Right ventricle myocardium superior (tissue), 1 donor: ENCODE measurements at regions of chr11 and their contacts with region 1.

Region 1: DNA sequence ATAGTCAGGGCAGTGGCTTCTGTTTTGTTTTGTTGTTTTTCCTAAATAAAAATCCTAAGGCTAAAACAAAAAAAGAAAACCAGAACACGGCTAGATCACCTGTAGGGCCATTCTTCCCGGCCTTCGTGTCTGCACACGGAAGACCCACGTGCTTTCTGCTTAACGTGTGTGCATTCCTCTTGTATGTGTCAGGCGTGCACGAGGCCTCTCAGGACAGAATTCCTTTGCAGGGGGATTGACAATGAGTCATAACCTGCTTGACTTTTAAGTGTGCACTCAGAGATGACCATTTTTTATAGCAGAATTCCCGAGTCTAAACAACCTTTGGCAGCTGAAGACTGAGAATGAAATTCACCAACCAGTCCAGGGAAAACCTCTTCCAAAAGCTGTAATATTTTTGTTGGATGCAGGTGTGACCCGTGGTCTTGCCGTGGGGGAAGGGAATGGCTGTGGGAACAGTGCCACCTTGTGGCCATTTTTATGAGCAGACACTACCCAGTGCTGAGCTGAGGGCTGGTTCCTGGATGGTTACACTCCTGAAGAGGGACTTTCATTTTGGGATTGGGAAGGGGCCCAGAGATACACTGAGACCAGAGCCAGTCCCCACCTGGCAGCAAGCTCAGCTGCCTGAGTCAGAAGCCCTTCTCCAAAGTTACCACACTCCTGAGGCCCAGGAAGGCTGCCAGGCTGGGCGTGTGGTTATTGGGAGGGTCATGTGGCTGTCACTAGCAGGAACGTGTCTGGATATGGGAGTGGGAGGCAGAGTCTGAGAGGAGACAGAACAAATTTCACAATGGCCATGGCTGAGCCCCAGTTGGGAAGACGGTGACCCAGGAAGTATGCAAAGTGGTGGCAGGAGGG is 35.8 kb upstream of the DKK3 start:
- DNase-seq: peak; percentile 85
- ATAC-seq: peak; percentile 89

Region 2: DNA sequence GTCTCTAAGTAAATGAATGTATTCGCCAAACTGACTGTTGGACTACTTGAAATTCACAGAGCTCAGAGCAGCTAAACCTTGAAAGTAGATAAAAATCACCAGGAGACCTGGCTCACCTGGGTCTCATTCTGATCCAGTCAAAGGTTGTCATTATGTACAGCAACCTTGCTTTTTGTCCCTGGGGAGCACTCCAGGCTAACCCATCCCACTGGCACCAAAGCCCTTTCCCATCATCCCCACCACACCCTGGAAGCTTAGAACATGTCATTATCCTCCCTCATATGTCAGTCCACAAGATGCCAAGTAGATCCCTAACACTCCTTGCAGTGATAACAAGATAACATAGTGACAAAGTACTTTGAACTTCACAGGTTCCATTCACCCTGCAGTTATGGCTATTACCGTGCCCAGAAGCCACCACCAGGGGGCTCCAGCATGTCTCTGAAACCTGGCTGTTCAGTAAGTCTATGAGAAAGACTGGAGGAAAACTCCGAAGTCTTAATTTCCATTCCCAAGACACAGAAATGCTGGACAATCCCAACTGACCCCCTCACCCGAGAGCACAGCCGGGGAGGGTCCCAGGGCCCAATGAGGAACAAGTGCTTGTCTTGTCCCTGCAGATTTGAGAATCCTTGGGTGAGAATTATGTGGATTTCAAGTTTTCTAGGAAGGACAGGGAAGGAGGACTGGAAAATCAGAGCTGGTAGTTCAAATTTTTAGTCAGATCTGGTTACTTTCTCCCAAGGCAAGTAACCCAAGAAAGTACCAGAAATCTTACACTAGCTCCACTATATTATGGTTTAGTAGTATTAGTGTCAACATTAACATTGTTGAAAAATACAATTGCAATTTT is 245.4 kb before region 1 on chr11:
- intact Hi-C with region 1: loop called (anchors 5 kb)
- DNase-seq: peak; percentile 92
- ATAC-seq: peak; percentile 95

Region 3: GRCh38 chr11:11929920-11930319 is 114.3 kb before region 1 on chr11:
- intact Hi-C with region 1: loop called (anchors 2 kb)
- DNase-seq: no peak
- ATAC-seq: no peak

Region 4: DNA sequence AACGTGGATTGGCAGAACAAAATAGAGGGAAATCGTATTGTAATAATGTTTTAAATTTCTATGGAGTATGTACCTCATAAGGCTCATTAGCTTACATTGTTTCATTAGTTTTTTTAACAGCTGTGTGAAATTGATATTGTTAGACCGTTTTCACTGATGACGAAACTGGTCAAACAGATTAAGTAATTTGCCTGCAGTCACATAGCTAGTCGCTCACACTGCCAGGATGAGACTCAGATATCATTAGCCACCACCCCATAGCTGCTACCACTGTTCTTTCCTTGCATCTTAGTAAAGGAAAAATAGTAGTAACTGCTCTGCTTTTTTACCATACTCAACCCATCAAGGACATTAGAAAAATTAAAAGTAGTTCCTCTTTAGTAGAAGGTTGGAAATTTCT is 99.7 kb before region 1 on chr11:
- intact Hi-C with region 1: no loop called
- DNase-seq: no peak
- ATAC-seq: no peak

Region 5: GRCh38 chr11:12086271-12087074 is 42.3 kb after region 1 on chr11:
- intact Hi-C with region 1: no loop called
- DNase-seq: peak; percentile 74
- ATAC-seq: peak; percentile 79

Region 6: DNA sequence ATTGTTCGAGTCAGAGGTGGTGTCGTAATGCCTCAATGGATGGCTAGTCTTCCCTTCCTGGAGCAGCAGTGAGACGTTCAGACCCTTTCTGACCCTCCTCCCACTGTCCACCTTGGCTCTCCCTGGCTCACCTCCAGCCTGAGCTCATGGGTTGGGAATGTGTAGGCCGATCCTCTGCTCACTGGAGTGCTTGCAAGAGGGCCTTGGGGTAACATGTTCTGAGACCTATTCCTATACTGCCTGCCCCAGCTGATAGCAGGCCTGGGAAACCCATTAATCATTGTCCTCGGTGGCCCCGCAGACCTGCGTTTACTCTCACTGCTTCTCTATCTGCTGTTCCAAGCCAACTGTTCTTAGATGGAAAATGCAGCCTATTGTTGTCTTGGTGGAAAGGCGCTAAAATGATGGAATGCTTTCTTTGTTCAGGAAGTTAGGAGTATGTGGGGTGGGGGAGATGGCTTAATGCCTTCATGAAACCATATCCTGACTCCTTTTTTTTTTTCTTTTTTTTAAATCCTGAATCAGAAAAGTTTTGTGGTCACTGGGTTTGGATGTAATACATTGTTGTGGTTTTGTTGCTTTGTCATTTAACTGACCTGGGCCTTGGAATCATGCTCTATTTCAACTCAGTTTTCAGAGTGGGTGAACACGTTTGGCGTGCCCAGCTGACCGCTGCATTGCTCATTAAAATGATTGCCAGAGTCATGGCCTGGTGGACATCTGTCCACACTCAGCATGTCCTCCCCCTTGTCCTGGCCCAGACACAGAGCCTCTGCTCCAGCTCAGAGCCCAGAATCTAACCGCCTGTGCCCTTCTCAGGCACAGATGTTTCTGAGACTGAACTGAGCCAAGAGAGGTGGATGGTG is 138.7 kb after region 1 on chr11:
- intact Hi-C with region 1: no loop called
- DNase-seq: peak; percentile 68
- ATAC-seq: peak; percentile 76

Region 7: GRCh38 chr11:12235947-12236743 is 192.0 kb after region 1 on chr11:
- intact Hi-C with region 1: loop called (anchors 5 kb)
- DNase-seq: no peak
- ATAC-seq: peak; percentile 63

Region 8: DNA sequence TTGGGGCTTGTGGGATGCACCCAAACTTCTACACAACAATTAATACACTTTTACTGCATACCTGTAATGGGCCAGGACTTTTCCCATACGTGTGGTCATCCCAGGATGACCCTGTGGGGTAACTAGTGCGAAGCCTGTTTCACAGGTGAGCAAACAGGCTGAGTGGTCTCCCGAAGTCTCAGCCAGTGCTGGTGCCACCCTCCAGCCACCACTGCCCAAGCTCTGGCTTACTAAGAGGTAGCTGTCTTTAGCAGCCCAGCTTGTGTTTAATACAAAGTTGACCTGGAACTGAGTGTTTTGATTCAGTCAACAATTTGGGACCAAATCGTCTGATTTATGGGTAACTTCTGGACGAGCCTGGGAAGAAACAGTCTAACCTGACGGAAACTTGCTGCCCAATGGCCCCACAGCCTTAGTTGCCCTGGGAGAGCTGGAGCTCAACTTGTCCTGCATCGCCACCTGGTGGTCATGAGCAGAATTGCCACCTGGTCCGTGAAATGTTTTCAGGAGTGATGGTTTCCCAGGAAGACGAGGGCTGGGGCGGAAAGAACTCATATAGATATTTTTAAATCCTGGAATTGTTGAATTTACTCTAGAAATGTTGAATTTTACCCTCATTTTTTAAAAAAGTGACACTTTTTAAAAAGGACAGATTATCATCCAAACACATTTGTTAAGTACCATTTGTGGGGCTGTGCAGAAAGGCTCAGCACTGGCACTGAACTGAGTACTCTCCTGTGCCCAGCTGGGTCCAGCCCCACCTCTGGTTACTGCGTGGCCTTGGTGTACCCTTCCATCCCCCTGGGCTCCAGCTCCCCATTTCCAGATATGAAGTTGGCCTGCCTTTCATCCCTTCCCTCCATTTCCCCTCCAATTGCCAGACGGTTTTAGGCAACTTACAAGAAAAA is 237.6 kb after region 1 on chr11:
- intact Hi-C with region 1: loop called (anchors 2 kb)
- DNase-seq: peak; percentile 88
- ATAC-seq: peak; percentile 86